ENCODE measurements at regions of chr19 and their contacts with region 1.

Region 1: GRCh38 chr19:20776083-20777076 is at the start of gene ZNF66:
- DNase-seq: peak; percentile 99
- H3K4me3 ChIP-seq: peak within 1 kb of the TSS; percentile 85
- H3K27ac ChIP-seq: peak within 1 kb of the TSS; percentile 77
- H3K4me1 ChIP-seq: peaks cover 3% of the 10 kb centered on the region
- CTCF ChIP-seq: no peak
- total RNA-seq, gene ZNF66: 32.4 and 34.2 TPM in 2 replicates

Region 2: DNA sequence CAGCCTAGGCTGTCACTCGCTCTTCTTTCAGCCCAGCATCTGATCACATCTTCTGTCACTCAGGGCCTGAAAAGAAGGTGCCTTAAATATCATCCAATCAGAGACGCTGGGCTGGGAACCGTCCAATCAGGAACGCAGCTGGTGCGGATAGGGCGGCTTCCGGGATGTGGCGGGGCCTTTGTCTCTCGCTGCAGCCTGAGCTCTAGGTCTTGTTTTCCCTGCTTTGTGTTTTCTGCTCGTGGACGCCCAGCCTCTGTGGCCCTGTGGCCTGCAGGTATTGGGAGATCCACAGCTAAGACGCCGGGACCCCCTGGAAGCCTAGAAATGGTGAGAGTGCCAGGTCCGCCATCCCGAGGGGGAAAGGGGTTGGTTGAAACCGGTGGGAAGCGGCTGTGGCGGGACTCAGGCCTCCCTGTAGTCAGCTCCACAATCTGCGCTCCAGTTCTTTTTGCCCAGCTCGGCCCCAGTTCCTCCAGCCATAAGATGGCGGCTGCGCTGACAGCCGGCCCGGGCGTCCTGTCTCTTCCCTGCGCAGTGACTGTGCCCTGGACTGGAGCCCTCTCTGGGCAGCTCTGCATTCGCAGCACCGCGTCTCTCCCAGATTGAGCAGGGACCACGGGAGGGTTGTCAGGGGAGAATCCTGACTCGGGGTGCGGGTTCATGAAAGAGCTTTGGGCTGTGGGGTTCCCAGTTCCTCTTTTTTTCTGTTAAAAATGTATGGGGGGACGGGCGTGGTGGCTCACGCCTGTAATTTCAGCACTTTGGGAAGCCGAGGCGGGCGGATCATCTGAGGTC is 146.9 kb after region 1 on chr19 and contains the start of gene ZNF85:
- CTCF ChIA-PET with region 1: no interaction called
- POLR2A ChIA-PET with region 1: interaction called, 19 read pairs
- intact Hi-C with region 1: loop called (anchors 1 kb)
- DNase-seq: peak; percentile 97
- H3K4me3 ChIP-seq: peak within 1 kb of the TSS; percentile 85
- H3K27ac ChIP-seq: peak within 1 kb of the TSS; percentile 88
- H3K4me1 ChIP-seq: peaks cover 15% of the 10 kb centered on the region
- CTCF ChIP-seq: no peak
- total RNA-seq, gene ZNF85: 26.5 and 27.1 TPM in 2 replicates

Region 3: GRCh38 chr19:21092109-21092508 is 315.7 kb after region 1 on chr19:
- CTCF ChIA-PET with region 1: no interaction called
- POLR2A ChIA-PET with region 1: no interaction called
- intact Hi-C with region 1: no loop called
- DNase-seq: no peak
- H3K4me3 ChIP-seq: no peak overlapping the region
- H3K27ac ChIP-seq: no peak overlapping the region
- H3K4me1 ChIP-seq: no peaks in the 10 kb centered on the region
- CTCF ChIP-seq: no peak